ENCODE measurements at regions of chr6 and their contacts with region 1.

Region 1: GRCh38 chr6:85482905-85483700 is 33.2 kb downstream of the NT5E start:
- DNase-seq: peak; percentile 94

Region 2: DNA sequence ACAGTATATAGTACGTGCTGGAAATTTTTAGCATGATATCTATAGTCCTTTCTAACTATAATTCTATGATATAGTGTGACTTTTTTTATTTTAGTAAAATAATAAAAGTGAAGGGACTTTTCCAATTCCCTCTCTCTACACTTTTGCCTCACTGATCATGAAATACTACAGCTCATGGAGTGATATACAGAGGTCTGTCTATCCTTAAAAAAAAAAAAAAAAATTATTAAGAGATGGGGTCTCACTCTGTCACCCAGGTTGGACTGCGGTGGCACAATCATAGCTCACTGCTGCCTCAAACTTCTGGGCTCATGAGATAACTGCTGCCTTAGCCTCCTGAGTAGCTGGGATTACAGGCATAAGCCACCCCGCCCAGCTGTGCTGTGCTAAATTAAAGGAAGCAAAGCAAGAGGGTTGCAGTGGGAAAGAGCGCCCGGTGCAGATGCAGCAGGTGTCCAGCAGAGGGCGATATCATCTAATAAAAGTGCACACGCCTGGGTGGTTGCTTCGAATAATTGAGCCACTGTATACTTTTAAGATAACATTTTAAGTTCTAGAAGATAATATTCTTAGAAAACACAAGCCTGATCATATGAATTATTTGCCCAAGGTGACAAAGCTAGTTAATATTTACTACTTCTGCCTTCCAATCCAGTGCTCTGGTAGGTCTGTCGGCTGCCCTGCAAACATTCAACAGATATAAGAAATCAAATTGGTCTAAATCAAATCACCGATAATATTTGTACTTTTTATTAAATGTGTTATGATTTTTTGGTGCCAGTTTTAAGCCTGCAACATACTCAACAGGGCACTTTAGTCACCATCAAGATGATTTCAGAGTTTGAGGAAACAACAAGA is 128.1 kb before region 1 on chr6:
- intact Hi-C with region 1: loop called (anchors 5 kb)
- DNase-seq: peak; percentile 90

Region 3: DNA sequence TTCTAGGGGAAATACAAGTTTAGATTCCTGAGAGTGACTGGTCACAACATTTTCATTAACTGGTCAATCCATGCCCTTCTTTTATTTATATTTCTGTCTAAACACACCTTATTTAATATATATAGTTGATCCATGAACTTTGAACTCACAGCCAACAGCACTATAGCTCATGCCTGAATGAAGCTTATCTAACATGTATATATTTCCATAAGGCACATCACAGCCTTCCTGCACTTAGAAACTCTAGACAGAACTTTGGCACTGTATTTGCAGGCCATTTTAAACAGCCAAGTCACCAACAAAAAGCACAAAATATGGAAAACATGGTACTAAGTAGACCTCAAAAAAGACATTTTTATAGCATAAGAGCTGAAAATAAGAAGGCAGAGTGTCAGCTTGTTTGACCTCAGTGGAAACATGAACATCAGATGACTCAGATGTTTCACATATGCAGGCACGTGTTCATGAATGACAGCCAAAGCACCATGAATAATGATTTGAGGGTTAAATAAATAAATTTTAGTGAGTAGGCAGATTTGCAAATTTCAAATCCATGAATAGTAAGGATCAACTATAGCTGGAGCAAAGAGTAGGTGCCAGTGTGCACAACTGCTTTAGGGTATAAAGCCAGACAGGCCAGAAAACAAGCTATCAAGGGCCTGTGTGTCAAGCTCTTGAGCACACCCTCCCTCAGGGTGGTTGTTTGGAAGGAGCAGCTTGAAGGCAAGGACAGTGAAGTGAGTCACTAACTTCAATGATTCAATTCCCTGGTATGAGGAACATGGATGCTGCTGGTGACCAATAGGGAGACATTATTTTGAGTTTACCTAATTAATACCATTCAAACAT is 122.1 kb before region 1 on chr6:
- intact Hi-C with region 1: loop called (anchors 5 kb)
- DNase-seq: no peak

Region 4: DNA sequence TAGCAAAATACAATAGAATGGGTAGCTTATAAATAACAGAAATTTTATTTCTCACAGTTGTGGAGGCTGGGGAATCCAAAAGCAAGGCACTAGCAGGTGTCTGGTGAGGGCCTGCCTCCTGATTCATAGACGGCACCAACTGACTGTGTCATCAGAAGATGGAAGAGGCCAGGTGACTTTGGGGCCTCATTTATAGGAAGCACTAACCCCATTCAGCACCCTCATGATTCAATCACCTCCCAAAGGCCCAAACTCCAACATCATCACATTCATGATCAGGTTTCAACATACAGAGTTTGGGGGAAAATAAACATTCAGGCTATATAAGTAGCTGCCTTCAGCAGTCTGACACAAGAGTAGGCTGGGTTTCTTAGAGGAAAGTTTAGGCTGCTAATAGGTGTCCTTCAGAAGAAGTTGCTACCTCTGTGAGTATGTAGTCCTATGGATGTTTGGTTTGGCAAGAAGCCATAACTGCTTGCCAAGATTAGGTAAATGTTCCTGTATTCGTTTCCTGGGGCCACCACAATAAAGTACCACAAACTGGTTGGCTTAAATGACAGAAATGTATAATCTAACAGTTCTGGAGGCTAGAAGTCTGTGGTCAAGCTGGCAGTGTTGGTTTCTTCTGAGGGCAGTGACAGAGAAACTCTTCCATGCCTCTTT is 15.6 kb after region 1 on chr6:
- intact Hi-C with region 1: no loop called
- DNase-seq: no peak